Dorsolateral prefrontal cortex (tissue), 120 donors: ENCODE measurements at regions of chr3 and their contacts with region 1.

Region 1: GRCh38 chr3:156449712-156450574 is 105.0 kb downstream of the SSR3 start:
- DNase-seq: no peak
- H3K4me3 ChIP-seq: no peak overlapping the region
- H3K27ac ChIP-seq: no peak overlapping the region
- H3K27me3 ChIP-seq: no peaks in the 10 kb centered on the region
- CTCF ChIP-seq: peak in 55 of 56 donors; percentile 31 to 76 (median 55)

Region 2: DNA sequence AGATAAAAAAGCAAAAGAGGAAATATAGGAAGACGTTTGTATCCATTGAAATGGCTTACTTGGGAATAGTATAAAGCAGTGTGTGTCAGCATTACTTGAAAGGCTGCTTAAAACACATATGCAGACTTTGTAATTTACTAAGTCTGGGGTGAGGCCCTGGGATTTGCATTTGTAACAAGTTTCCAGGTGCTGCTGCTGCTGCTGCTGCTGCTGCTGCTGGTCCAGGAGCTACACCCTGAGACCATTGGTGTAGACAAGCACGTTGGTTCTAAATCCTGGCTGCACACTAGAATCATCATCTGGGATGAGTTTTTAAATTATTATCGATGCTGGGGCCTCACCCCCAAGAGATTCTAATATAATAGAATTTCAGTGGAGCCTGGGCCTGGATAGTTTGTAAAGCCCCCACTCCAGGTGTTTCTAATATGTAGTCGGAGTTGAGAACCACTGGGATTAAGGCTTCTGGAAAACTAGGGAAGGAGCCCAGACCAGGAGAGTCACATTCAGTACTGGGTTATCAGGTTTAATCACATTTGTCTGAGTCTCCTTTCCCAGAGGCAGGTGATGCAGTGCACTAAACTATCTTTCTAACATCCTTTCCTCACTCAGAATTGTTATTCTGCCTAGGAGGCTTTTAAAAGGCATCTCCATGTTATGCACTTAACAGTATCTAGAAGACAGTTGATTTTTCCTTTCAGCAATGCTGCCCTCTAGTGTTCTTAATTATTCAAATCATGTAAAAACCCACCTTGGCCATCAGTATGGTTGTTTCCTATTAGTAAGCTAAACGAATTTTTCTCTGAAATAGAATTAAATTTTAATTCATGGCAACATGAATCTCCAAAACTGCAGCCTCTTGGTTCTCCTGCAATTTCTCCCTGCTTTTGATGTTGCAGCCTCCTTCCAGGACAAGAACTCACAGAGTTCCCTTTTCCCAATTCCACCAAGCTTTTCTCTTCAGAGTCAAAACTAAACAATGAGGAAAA is 59.5 kb after region 1 on chr3:
- intact Hi-C with region 1: loop called in 1 of 2 experiments (anchors 2 kb)
- DNase-seq: no peak
- H3K4me3 ChIP-seq: no peak overlapping the region
- H3K27ac ChIP-seq: no peak overlapping the region
- H3K27me3 ChIP-seq: no peaks in the 10 kb centered on the region
- CTCF ChIP-seq: peak; percentile 39 to 92 (median 77)